CD4-positive, alpha-beta memory T cell (primary cell): ENCODE measurements at regions of chr6 and their contacts with region 1.

Region 1: GRCh38 chr6:27838058-27838944 is 73.9 kb downstream of the OR2B2 start:
- DNase-seq: peak; percentile 91 to 94 (median 92)
- H3K4me3 ChIP-seq: peak overlapping the region; percentile 63 to 67
- H3K4me3 Mint-ChIP-seq: no peak overlapping the region
- H3K27ac ChIP-seq: peak overlapping the region; percentile 93
- H3K27ac Mint-ChIP-seq: no peak overlapping the region
- H3K4me1 ChIP-seq: peaks cover 30% of the 10 kb centered on the region
- H3K4me1 Mint-ChIP-seq: peaks cover 6 to 20% (median 12%) of the 10 kb centered on the region in 4 donors
- H3K27me3 ChIP-seq: no peaks in the 10 kb centered on the region
- H3K27me3 Mint-ChIP-seq: peaks cover 2 to 3% of the 10 kb centered on the region in 2 donors

Region 2: DNA sequence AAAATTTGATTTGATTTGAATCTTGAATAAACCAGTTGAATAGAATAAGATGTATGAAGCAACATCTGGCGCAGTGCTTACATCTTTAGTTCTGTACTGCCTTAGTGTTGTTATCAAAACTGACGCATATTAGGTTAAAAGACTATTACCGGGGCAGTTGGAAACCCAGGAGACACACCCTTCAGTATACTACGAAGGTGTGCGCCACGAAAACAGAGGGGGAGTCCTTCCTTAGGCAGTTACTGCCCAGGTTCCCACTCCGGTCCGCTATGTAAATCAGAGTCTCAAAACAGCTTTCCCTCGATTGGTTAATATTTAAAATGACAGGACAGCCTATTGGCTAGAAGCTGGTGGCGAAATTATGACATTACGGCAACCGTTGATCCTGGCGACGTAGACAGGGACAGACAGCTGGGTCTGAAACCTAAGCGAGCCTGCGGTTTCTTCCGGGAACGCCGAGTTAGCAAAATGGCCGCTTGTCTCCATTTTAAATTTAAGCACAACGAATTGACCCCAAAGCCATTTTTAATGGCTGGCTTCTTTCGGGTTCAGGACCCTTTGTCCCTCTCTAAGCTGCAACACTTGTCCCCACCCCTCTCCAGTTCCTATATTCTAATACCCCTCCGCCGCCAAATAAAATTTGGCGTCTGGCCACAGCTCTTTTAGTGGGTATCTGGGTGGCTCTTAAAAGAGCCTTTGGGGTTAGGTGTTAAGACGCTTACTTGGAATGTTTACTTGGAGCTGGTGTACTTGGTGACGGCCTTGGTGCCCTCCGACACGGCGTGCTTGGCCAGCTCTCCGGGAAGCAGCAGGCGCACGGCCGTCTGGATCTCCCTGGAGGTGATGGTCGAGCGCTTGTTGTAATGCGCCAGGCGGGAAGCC is 1715.3 kb before region 1 on chr6:
- CTCF ChIA-PET with region 1: no interaction called
- POLR2A ChIA-PET with region 1: interaction called, 84 read pairs
- intact Hi-C with region 1: no loop called
- DNase-seq: peak; percentile 94 to 98 (median 98)
- H3K4me3 ChIP-seq: peak overlapping the region; percentile 87 to 98
- H3K4me3 Mint-ChIP-seq: peak overlapping the region; percentile 96 to 100 (median 100)
- H3K27ac ChIP-seq: peak overlapping the region; percentile 89
- H3K27ac Mint-ChIP-seq: peak overlapping the region; percentile 97 to 99 (median 99)
- H3K4me1 ChIP-seq: peaks cover 26% of the 10 kb centered on the region
- H3K4me1 Mint-ChIP-seq: peaks cover 20 to 54% (median 30%) of the 10 kb centered on the region in 4 donors
- H3K27me3 ChIP-seq: no peaks in the 10 kb centered on the region
- H3K27me3 Mint-ChIP-seq: peaks cover 0 to 3% of the 10 kb centered on the region in 2 donors

Region 3: DNA sequence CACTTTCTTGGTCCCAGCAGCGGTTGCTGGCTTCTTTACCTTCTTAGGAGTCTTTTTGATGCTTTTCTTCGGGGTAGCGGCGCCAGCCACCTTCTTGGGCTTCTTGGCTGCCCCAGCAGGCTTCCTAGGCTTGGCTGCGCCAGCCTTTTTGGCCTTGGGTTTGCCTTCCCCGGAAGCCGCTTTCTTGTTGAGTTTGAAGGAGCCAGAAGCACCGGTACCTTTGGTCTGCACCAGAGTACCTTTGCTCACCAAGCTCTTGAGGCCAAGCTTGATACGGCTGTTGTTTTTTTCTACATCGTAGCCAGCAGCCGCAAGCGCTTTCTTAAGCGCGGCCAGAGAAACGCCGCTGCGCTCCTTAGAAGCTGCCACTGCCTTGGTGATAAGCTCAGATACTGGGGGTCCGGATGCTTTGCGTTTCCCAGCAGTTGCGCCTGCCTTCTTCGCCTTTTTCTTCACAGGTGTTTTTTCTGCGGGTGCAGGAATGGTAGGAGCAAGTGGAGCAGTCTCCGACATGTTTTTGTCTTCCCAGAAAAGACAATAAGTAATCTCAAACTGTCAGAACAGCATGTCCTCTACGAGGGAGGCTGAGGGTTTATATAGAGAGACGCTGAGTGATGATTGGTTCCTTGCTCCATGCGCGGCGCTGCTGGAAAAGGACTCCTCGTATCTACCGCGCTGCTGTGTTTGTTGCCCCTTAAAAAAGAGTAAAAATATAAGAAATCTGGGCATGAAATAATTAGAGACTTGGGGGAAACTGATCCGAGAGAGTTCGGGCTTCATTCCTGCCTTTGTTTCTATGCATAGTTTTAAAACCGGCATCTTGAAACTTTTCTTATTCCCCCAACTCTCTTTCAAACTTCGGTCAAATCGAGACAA is 1603.6 kb before region 1 on chr6:
- CTCF ChIA-PET with region 1: no interaction called
- POLR2A ChIA-PET with region 1: interaction called, 35 read pairs
- intact Hi-C with region 1: no loop called
- DNase-seq: peak; percentile 70 to 87 (median 85)
- H3K4me3 ChIP-seq: peak overlapping the region; percentile 66 to 95
- H3K4me3 Mint-ChIP-seq: peak overlapping the region; percentile 93 to 99 (median 96)
- H3K27ac ChIP-seq: peak overlapping the region; percentile 83
- H3K27ac Mint-ChIP-seq: peak overlapping the region; percentile 90 to 99 (median 96)
- H3K4me1 ChIP-seq: peaks cover 23% of the 10 kb centered on the region
- H3K4me1 Mint-ChIP-seq: peaks cover 18 to 43% (median 26%) of the 10 kb centered on the region in 4 donors
- H3K27me3 ChIP-seq: no peaks in the 10 kb centered on the region
- H3K27me3 Mint-ChIP-seq: no peaks in the 10 kb centered on the region

Region 4: GRCh38 chr6:27472617-27473400 is 365.5 kb before region 1 on chr6 and contains the start of gene ZNF184:
- CTCF ChIA-PET with region 1: no interaction called
- POLR2A ChIA-PET with region 1: interaction called, 10 read pairs
- intact Hi-C with region 1: no loop called
- DNase-seq: peak; percentile 86 to 90 (median 89)
- H3K4me3 ChIP-seq: peak within 1 kb of the TSS; percentile 70 to 98
- H3K4me3 Mint-ChIP-seq: peak within 1 kb of the TSS; percentile 92 to 99 (median 96)
- H3K27ac ChIP-seq: peak within 1 kb of the TSS; percentile 92
- H3K27ac Mint-ChIP-seq: peak within 1 kb of the TSS; percentile 93 to 99 (median 96)
- H3K4me1 ChIP-seq: peaks cover 56% of the 10 kb centered on the region
- H3K4me1 Mint-ChIP-seq: peaks cover 33 to 65% (median 43%) of the 10 kb centered on the region in 4 donors
- H3K27me3 ChIP-seq: no peaks in the 10 kb centered on the region
- H3K27me3 Mint-ChIP-seq: no peaks in the 10 kb centered on the region
- total RNA-seq, gene ZNF184: 15.2 to 17.4 TPM

Region 5: GRCh38 chr6:27809939-27810767 is 28.1 kb before region 1 on chr6:
- CTCF ChIA-PET with region 1: interaction called, 67 read pairs
- POLR2A ChIA-PET with region 1: interaction called, 457 read pairs
- intact Hi-C with region 1: loop called (anchors 1 kb)
- DNase-seq: peak; percentile 85 to 94 (median 92)
- H3K4me3 ChIP-seq: peak overlapping the region; percentile 31 to 67
- H3K4me3 Mint-ChIP-seq: peak overlapping the region; percentile 92 to 99 (median 96)
- H3K27ac ChIP-seq: peak overlapping the region; percentile 79
- H3K27ac Mint-ChIP-seq: peak overlapping the region; percentile 94 to 98 (median 97)
- H3K4me1 ChIP-seq: peaks cover 49% of the 10 kb centered on the region
- H3K4me1 Mint-ChIP-seq: peaks cover 39 to 74% (median 50%) of the 10 kb centered on the region in 4 donors
- H3K27me3 ChIP-seq: no peaks in the 10 kb centered on the region
- H3K27me3 Mint-ChIP-seq: no peaks in the 10 kb centered on the region

Region 6: GRCh38 chr6:27871924-27872638 is 33.8 kb after region 1 on chr6:
- CTCF ChIA-PET with region 1: interaction called, 173 read pairs
- POLR2A ChIA-PET with region 1: interaction called, 1,261 read pairs
- intact Hi-C with region 1: loop called (anchors 1 kb)
- DNase-seq: peak; percentile 91 to 96 (median 94)
- H3K4me3 ChIP-seq: peak overlapping the region; percentile 77 to 89
- H3K4me3 Mint-ChIP-seq: peak overlapping the region; percentile 87 to 94 (median 90)
- H3K27ac ChIP-seq: peak overlapping the region; percentile 86
- H3K27ac Mint-ChIP-seq: peak overlapping the region; percentile 89 to 97 (median 94)
- H3K4me1 ChIP-seq: peaks cover 33% of the 10 kb centered on the region
- H3K4me1 Mint-ChIP-seq: peaks cover 24 to 48% (median 33%) of the 10 kb centered on the region in 4 donors
- H3K27me3 ChIP-seq: no peaks in the 10 kb centered on the region
- H3K27me3 Mint-ChIP-seq: no peaks in the 10 kb centered on the region